CD8-positive, alpha-beta T cell (primary cell): ENCODE measurements at regions of chr16 and their contacts with region 1.

Region 1: GRCh38 chr16:16127469-16128116 is 95.7 kb downstream of the ABCC6 start:
- DNase-seq: peak; percentile 47 to 80 (median 66)
- ATAC-seq: peak; percentile 92
- H3K4me3 ChIP-seq: no peak overlapping the region
- H3K4me3 Mint-ChIP-seq: no peak overlapping the region
- H3K27ac ChIP-seq: no peak overlapping the region
- H3K27ac Mint-ChIP-seq: no peak overlapping the region
- H3K4me1 ChIP-seq: no peaks in the 10 kb centered on the region
- H3K4me1 Mint-ChIP-seq: peaks cover 1% of the 10 kb centered on the region
- H3K27me3 ChIP-seq: no peaks in the 10 kb centered on the region
- H3K27me3 Mint-ChIP-seq: no peaks in the 10 kb centered on the region
- CTCF ChIP-seq: peak; percentile 79

Region 2: DNA sequence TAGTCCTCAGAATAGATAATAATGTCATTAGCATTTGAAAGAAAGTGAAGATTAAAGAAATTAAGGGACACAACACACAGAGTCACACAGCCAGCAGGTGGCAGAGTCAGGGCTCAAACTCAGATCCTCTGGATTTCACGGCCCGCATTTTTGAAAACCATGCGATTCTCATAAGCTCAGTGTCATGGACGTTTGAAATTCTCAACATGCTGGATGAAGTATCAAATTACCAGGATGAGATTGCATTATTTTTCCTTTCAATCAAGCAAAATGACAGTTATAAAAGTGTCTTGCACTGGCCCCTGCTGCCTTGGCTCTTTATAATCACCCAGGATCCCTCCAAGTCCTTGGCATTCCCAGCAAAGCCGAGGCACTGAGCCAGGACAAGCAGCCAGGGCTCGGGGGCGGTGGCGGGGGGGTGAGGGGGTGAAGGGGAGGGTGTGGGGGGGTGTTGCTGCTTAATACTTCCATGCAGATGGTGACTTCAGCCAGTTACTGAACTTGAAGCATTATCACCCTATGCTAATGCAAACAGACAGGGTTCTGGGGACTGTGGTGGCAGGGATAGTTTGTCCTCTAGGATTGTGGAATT is 699.8 kb before region 1 on chr16:
- CTCF ChIA-PET with region 1: no interaction called
- POLR2A ChIA-PET with region 1: no interaction called
- intact Hi-C with region 1: loop called in 1 of 2 experiments (anchors 1 kb)
- DNase-seq: peak; percentile 12 to 71 (median 52)
- ATAC-seq: no peak
- H3K4me3 ChIP-seq: no peak overlapping the region
- H3K4me3 Mint-ChIP-seq: no peak overlapping the region
- H3K27ac ChIP-seq: no peak overlapping the region
- H3K27ac Mint-ChIP-seq: no peak overlapping the region
- H3K4me1 ChIP-seq: no peaks in the 10 kb centered on the region
- H3K4me1 Mint-ChIP-seq: peaks cover 2% of the 10 kb centered on the region
- H3K27me3 ChIP-seq: no peaks in the 10 kb centered on the region
- H3K27me3 Mint-ChIP-seq: peaks cover under 1% of the 10 kb centered on the region
- CTCF ChIP-seq: peak; percentile 63

Region 3: DNA sequence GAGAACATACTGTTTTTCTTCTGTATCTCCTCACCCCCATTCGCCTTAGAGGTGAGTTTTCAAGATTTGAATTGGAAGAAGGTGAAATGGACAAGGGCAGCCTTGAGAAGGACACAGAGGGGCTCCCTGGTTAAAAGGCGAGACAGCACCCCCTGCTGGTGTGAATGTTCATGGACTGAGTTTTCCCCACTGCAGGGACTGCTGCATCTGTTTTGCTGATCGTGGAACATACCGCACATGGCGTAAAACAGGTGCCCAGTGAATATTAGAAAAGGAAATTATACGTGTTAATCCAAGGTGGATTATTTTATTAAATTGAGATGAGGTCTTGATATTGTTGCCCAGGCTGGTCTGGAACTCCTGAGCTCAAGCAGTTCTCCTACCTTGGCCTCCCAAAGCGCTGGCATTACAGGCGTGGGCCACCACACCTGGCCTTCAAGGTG is 423.0 kb before region 1 on chr16:
- CTCF ChIA-PET with region 1: no interaction called
- POLR2A ChIA-PET with region 1: no interaction called
- intact Hi-C with region 1: loop called in 1 of 2 experiments (anchors 5 kb)
- DNase-seq: peak; percentile 56 to 87 (median 73)
- ATAC-seq: peak; percentile 82
- H3K4me3 ChIP-seq: no peak overlapping the region
- H3K4me3 Mint-ChIP-seq: no peak overlapping the region
- H3K27ac ChIP-seq: no peak overlapping the region
- H3K27ac Mint-ChIP-seq: peak overlapping the region; percentile 22
- H3K4me1 ChIP-seq: no peaks in the 10 kb centered on the region
- H3K4me1 Mint-ChIP-seq: peaks cover 16% of the 10 kb centered on the region
- H3K27me3 ChIP-seq: no peaks in the 10 kb centered on the region
- H3K27me3 Mint-ChIP-seq: no peaks in the 10 kb centered on the region
- CTCF ChIP-seq: peak; percentile 88

Region 4: DNA sequence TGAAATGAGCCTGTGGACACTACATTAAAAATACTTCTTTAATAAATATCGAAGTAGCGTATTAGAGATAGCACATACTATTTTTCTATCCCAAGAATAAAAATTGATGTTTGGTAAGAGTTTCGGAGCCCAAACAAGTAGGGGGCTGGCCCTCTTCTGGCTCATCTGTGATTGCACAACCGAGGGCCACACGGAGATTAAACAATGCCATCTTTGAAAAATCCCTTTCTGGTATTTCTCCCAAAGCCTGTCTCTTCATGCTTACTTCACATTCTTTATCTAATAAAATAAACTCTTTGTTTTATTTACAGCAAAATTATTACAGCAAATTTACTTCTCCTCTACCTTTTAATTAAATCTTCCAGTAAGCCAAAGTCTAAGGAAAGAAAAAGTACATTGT is 261.1 kb before region 1 on chr16:
- CTCF ChIA-PET with region 1: interaction called, 10 read pairs
- POLR2A ChIA-PET with region 1: no interaction called
- intact Hi-C with region 1: no loop called
- DNase-seq: no peak
- ATAC-seq: no peak
- H3K4me3 ChIP-seq: no peak overlapping the region
- H3K4me3 Mint-ChIP-seq: no peak overlapping the region
- H3K27ac ChIP-seq: no peak overlapping the region
- H3K27ac Mint-ChIP-seq: no peak overlapping the region
- H3K4me1 ChIP-seq: no peaks in the 10 kb centered on the region
- H3K4me1 Mint-ChIP-seq: no peaks in the 10 kb centered on the region
- H3K27me3 ChIP-seq: no peaks in the 10 kb centered on the region
- H3K27me3 Mint-ChIP-seq: no peaks in the 10 kb centered on the region
- CTCF ChIP-seq: no peak

Region 5: GRCh38 chr16:15888072-15888976 is 239.3 kb before region 1 on chr16 and contains the start of gene CEP20:
- CTCF ChIA-PET with region 1: interaction called, 3 read pairs
- POLR2A ChIA-PET with region 1: interaction called, 6 read pairs
- intact Hi-C with region 1: loop called in 1 of 2 experiments (anchors 5 kb)
- DNase-seq: peak; percentile 99 to 100 (median 100)
- ATAC-seq: peak; percentile 97
- H3K4me3 ChIP-seq: peak within 1 kb of the TSS; percentile 85 to 100
- H3K4me3 Mint-ChIP-seq: peak within 1 kb of the TSS; percentile 100
- H3K27ac ChIP-seq: peak within 1 kb of the TSS; percentile 79 to 91
- H3K27ac Mint-ChIP-seq: peak within 1 kb of the TSS; percentile 98
- H3K4me1 ChIP-seq: peaks cover 23% of the 10 kb centered on the region
- H3K4me1 Mint-ChIP-seq: peaks cover 36% of the 10 kb centered on the region
- H3K27me3 ChIP-seq: no peaks in the 10 kb centered on the region
- H3K27me3 Mint-ChIP-seq: no peaks in the 10 kb centered on the region
- CTCF ChIP-seq: no peak
- total RNA-seq, gene CEP20: 12.5 to 13.6 TPM